Activated B cell treated with CpG ODN at 0.5 μM for 24 hours (primary cell): ENCODE measurements at regions of chr6 and their contacts with region 1.

Region 1: DNA sequence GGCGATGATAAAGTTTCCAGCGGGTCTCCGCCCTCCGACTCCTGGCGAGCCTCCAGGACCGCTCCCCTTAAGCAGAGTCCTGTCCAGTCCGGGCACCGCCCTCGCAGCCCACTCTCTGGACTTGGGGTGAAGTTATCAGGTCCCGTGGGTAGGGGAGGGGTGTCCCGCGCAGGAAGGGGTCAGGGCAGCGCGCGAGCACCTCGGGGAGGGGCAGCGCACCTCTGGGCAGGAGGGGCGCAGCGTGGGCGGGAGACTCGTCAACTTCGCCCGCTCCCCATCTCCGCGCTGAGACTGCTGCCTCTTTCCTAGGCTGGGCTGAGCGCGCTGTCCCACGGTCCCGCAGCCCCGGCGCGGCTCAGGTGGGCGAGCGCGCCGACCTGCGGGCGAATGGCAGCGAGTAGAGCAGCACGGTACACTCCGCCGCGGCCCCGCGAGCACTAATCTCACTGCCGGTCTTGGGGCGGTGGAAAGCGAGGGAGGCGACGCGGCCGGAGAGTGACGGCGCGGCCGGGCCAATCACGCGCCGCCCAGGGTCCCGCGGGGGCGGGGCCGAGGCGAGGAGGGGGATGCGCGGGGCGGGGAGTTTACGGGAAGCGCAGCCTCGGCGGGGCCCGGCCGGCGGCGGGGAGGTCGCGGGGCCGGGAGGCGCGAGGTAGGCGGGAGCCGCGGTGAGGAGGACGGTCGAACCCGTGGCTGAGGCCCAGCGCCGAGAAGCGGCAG is at the start of gene MAN1A1:
- DNase-seq: peak; percentile 96
- ATAC-seq: peak; percentile 85
- H3K4me3 Mint-ChIP-seq: peak within 1 kb of the TSS; percentile 93
- H3K27ac Mint-ChIP-seq: peak within 1 kb of the TSS; percentile 94
- H3K4me1 Mint-ChIP-seq: peaks cover 61% of the 10 kb centered on the region
- H3K27me3 Mint-ChIP-seq: no peaks in the 10 kb centered on the region
- CTCF ChIP-seq: no peak
- total RNA-seq, gene MAN1A1: 17.7 and 18.1 TPM in 2 replicates

Region 2: DNA sequence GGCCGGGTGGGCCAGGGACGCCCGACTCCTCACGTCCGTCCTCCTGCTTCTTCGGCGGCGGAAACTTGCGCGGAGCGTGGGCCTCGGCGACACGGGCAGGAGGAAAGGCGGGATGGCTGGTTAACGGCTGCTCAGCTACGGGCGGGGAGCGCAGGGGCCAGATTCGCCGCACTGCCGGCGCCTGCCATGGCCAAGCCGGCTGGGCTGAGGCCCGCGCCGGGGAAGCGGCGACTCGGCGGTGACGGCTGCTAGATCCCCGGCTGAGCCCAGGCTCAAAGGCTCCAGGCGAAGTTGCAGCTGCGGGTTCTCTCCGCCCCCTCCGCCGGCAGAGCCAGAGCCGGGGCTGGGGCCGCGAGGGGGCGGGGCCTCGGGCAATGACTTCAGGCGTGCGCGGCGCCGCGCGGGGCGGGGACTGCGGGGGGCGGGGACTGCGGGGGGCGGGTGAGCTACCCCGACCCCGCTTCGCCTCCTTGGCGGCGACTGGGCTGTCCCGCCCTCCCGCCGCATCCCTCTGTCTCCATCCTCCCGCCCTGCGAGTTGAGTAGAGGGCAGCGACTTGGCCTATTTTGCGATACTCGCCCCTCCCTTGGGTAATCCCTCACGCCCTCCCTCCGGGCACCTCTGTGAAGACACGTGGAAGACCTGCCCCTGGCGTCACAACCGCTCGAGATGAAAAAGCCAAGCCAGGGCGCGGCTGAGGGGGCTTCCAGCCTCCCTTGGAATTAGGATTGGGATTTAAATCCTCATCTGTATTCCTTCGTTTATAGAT is 698.0 kb before region 1 on chr6 and contains the start of gene CEP85L:
- CTCF ChIA-PET with region 1: no interaction called
- POLR2A ChIA-PET with region 1: no interaction called
- intact Hi-C with region 1: loop called (anchors 2 kb)
- DNase-seq: peak; percentile 85
- ATAC-seq: peak; percentile 91
- H3K4me3 Mint-ChIP-seq: peak within 1 kb of the TSS; percentile 98
- H3K27ac Mint-ChIP-seq: peak within 1 kb of the TSS; percentile 93
- H3K4me1 Mint-ChIP-seq: peaks cover 22% of the 10 kb centered on the region
- H3K27me3 Mint-ChIP-seq: no peaks in the 10 kb centered on the region
- CTCF ChIP-seq: no peak
- total RNA-seq, gene CEP85L: 14.6 and 21.8 TPM in 2 replicates

Region 3: DNA sequence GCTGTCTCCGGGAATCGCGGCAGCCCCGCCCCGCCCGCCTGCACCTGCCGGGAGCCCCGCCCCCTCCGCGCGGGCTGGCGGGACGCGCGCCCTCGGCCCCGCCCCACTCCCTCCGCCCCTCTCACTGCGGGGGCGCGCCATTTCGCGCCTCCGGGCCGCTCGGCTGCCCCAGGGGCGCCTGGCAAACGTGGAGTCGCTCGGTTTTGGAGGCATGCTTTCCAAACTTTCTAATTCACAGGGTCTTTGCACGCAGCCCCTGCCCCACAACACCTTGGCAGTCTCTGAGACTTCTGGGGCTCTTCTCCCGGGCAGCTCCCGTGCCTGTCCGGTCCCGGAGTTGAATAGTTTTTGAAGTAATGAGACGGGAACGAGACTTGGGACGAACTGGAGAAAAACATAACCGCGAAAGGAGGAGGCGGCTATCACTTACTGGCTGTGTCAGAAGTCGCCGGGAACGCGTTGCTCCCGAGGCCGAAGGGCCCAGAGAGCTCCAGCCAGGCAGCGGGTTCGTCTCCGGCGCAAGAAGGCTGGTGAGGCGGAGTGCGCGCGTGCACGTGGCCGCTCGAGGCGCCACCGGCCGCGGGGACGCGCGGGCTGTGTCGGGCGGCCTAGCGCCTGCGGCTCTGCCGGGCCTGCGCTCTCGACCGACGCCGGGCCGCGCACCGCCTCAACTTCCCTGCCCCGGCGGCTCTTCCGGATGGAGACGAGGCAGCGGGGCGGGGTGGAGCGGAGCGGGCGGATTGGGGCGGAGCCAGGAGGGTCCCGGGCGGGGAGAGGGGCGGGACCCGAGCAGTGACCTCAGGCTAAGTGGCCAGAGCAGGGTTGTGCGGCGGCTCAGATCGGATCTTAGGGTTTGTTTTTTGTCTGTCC is 414.8 kb before region 1 on chr6 and contains the start of gene MCM9:
- CTCF ChIA-PET with region 1: no interaction called
- POLR2A ChIA-PET with region 1: interaction called, 3 read pairs
- intact Hi-C with region 1: loop called (anchors 1 kb)
- DNase-seq: peak; percentile 90
- ATAC-seq: peak; percentile 92
- H3K4me3 Mint-ChIP-seq: peak within 1 kb of the TSS; percentile 89
- H3K27ac Mint-ChIP-seq: peak within 1 kb of the TSS; percentile 91
- H3K4me1 Mint-ChIP-seq: peaks cover 32% of the 10 kb centered on the region
- H3K27me3 Mint-ChIP-seq: no peaks in the 10 kb centered on the region
- CTCF ChIP-seq: no peak
- total RNA-seq, gene MCM9: 33.3 and 37.0 TPM in 2 replicates

Region 4: DNA sequence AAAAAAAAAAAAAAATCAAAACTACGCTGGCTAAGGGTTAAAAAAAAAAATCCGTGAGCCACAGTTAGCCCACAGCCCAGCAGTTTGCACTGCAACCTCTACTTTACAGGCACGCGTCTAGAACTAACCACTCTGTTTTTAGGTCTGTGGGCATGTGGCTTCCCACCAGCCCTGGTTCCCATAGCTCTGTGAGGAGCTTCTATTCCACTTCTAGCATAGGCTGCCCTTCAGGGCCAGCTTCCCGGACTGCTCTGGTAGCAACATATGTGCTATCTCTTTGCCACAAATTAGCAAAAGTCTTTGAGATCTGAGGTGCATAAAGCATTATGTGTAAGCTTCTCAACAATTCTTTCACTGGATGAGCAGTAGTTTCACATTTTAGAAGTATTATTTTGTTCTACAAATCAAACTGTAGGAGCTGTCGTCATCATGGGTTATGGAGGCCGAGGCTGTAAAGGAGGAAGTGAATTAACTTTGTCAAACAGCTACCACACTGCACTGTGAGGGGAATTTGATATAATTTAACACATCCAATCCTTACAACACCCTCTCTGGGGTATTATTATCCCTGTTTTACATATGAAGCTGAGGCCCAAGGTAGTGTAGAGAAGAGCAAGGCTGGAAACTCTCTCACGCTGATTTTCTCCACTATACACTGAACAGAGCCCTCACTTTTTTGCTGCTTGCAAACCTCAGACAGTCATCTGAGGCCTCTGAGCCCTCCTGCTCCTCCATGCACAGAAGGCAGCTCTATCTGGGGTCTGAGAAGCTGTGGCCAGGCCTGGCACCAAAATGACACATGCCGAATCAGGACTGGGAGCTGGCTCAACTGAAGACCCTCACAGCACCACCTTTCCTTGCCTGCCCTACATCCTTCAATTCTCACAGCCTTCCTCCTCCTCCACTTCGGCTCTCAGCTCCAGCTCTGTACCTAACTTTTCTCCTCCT is 35.3 kb before region 1 on chr6:
- CTCF ChIA-PET with region 1: no interaction called
- POLR2A ChIA-PET with region 1: interaction called, 30 read pairs
- intact Hi-C with region 1: loop called (anchors 1 kb)
- DNase-seq: peak; percentile 23
- ATAC-seq: peak; percentile 74
- H3K4me3 Mint-ChIP-seq: peak overlapping the region; percentile 42
- H3K27ac Mint-ChIP-seq: peak overlapping the region; percentile 81
- H3K4me1 Mint-ChIP-seq: peaks cover 44% of the 10 kb centered on the region
- H3K27me3 Mint-ChIP-seq: no peaks in the 10 kb centered on the region
- CTCF ChIP-seq: no peak

Region 5: GRCh38 chr6:119442776-119443184 is 93.3 kb after region 1 on chr6:
- CTCF ChIA-PET with region 1: no interaction called
- POLR2A ChIA-PET with region 1: no interaction called
- intact Hi-C with region 1: loop called (anchors 5 kb)
- DNase-seq: no peak
- ATAC-seq: peak; percentile 29
- H3K4me3 Mint-ChIP-seq: peak overlapping the region; percentile 2
- H3K27ac Mint-ChIP-seq: no peak overlapping the region
- H3K4me1 Mint-ChIP-seq: peaks cover 43% of the 10 kb centered on the region
- H3K27me3 Mint-ChIP-seq: no peaks in the 10 kb centered on the region
- CTCF ChIP-seq: no peak

Region 6: GRCh38 chr6:119742188-119742803 is 392.8 kb after region 1 on chr6:
- CTCF ChIA-PET with region 1: no interaction called
- POLR2A ChIA-PET with region 1: no interaction called
- intact Hi-C with region 1: loop called (anchors 1 kb)
- DNase-seq: peak; percentile 44
- ATAC-seq: peak; percentile 76
- H3K4me3 Mint-ChIP-seq: no peak overlapping the region
- H3K27ac Mint-ChIP-seq: no peak overlapping the region
- H3K4me1 Mint-ChIP-seq: no peaks in the 10 kb centered on the region
- H3K27me3 Mint-ChIP-seq: no peaks in the 10 kb centered on the region
- CTCF ChIP-seq: peak; percentile 61